PC-9 (cell line): ENCODE measurements at regions of chr10 and their contacts with region 1.

Region 1: GRCh38 chr10:80924063-80924952 is 386.6 kb downstream of the SH2D4B start:
- DNase-seq: peak in 1 of 2 experiments; percentile 34
- H3K4me3 ChIP-seq: no peak overlapping the region
- H3K27ac ChIP-seq: no peak overlapping the region
- H3K4me1 ChIP-seq: no peaks in the 10 kb centered on the region
- H3K27me3 ChIP-seq: no peaks in the 10 kb centered on the region
- CTCF ChIP-seq: peak; percentile 85

Region 2: GRCh38 chr10:80535671-80536365 is 388.5 kb before region 1 on chr10:
- CTCF ChIA-PET with region 1: no interaction called
- POLR2A ChIA-PET with region 1: no interaction called
- intact Hi-C with region 1: loop called (anchors 10 kb)
- DNase-seq: peak; percentile 57 to 80
- H3K4me3 ChIP-seq: peak overlapping the region; percentile 67
- H3K27ac ChIP-seq: no peak overlapping the region
- H3K4me1 ChIP-seq: 0 out of 2 replicates have a peak, but pooled peaks cover 6% of the 10 kb centered on the region
- H3K27me3 ChIP-seq: no peaks in the 10 kb centered on the region
- CTCF ChIP-seq: peak; percentile 89

Region 3: DNA sequence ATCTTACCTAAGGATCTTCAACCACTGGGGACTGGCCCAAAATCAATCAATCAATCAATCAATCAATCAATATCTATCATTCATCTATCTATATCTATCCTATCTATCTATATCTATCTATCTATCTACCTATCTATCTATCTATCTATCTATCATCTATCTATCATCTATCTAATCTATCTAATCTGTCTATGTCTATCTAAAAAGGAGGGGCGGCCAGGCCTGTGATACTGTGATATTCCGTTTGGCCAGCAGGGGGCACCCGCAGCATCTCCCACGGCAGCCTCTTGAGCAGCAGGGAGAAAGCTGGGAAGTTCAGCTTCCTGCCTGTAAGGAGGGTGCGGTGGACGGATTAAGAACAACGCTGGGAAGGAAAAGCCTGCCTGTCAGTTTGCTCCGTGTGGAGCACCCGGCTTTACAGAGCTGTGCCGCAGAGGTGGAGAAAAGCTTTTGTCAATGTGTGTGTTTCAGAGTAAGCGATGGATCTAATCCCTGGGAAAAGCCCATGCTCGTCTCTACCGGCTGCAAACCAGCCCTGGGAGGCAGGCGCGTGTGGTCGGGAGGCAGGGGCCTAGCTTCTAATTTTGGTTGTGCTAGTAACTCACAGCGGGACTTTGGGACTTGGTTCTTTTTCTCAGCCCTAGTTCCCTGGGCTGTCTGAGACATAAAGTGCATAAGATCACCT is 261.6 kb before region 1 on chr10:
- CTCF ChIA-PET with region 1: no interaction called
- POLR2A ChIA-PET with region 1: no interaction called
- intact Hi-C with region 1: loop called (anchors 2 kb)
- DNase-seq: peak in 1 of 2 experiments; percentile 75
- H3K4me3 ChIP-seq: no peak overlapping the region
- H3K27ac ChIP-seq: no peak overlapping the region
- H3K4me1 ChIP-seq: no peaks in the 10 kb centered on the region
- H3K27me3 ChIP-seq: peaks cover 38% of the 10 kb centered on the region
- CTCF ChIP-seq: peak; percentile 97

Region 4: GRCh38 chr10:80699602-80700039 is 224.7 kb before region 1 on chr10:
- CTCF ChIA-PET with region 1: no interaction called
- POLR2A ChIA-PET with region 1: no interaction called
- intact Hi-C with region 1: loop called (anchors 1 kb)
- DNase-seq: peak; percentile 49 to 69
- H3K4me3 ChIP-seq: no peak overlapping the region
- H3K27ac ChIP-seq: no peak overlapping the region
- H3K4me1 ChIP-seq: no peaks in the 10 kb centered on the region
- H3K27me3 ChIP-seq: peaks cover 82% of the 10 kb centered on the region
- CTCF ChIP-seq: peak; percentile 90